ENCODE measurements at regions of chr11 and their contacts with region 1.

Region 1: GRCh38 chr11:100776212-100776896 is 89.3 kb downstream of the ARHGAP42 start:
- DNase-seq: peak; percentile 40 to 100
- H3K4me3 ChIP-seq: peak overlapping the region; percentile 0; the same call in 1 of the 2 replicates
- H3K27ac ChIP-seq: peak overlapping the region; percentile 98
- H3K4me1 ChIP-seq: peaks cover 44% of the 10 kb centered on the region
- H3K27me3 ChIP-seq: no peaks in the 10 kb centered on the region
- CTCF ChIP-seq: no peak

Region 2: DNA sequence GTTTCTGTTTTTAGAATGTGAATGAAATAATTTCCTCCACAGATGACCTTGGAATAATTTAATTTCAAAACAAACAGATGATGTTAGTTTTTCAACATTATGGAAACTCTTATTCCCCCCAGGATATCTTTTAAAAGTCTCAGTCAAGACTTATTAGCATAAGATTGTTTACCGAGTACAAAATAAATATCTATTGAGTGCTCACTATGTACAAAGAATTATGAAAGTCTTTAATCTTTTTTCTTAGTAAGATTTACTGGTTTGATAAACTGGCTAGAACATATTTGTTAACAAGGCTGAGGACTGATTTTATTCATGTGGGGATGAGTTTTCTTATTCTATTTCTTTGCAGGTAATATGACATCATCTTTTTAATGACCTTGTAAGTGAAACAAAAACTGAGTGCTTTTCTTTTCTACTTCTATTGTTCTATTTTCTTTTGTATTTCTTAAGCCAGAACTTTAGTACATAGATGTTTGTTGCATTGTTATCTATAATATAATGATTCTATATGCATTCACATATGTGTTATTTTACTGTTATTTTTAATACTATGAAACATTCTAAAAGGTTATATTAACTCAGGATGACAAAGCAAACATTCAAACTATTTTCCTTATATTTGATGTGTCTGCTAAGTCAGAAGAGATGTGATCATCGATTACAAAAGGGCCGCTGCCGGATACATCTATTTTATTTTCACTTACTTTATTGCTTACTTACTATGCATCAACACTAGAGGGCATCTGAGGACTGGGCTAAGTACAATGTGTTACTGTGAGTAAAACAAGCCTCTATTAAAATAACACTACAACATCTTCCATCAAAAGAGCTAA is 200.3 kb before region 1 on chr11:
- CTCF ChIA-PET with region 1: interaction called, 5 read pairs
- POLR2A ChIA-PET with region 1: interaction called, 22 read pairs
- intact Hi-C with region 1: loop called (anchors 1 kb)
- DNase-seq: peak; percentile 6 to 67
- H3K4me3 ChIP-seq: no peak overlapping the region
- H3K27ac ChIP-seq: no peak overlapping the region
- H3K4me1 ChIP-seq: peaks cover 6% of the 10 kb centered on the region
- H3K27me3 ChIP-seq: no peaks in the 10 kb centered on the region
- CTCF ChIP-seq: peak; percentile 97

Region 3: GRCh38 chr11:100706179-100706578 is 70.2 kb before region 1 on chr11:
- CTCF ChIA-PET with region 1: no interaction called
- POLR2A ChIA-PET with region 1: interaction called, 10 read pairs
- intact Hi-C with region 1: no loop called
- DNase-seq: no peak
- H3K4me3 ChIP-seq: no peak overlapping the region
- H3K27ac ChIP-seq: no peak overlapping the region
- H3K4me1 ChIP-seq: peaks cover 14% of the 10 kb centered on the region
- H3K27me3 ChIP-seq: no peaks in the 10 kb centered on the region
- CTCF ChIP-seq: no peak

Region 4: GRCh38 chr11:100739666-100740065 is 36.7 kb before region 1 on chr11:
- CTCF ChIA-PET with region 1: no interaction called
- POLR2A ChIA-PET with region 1: interaction called, 20 read pairs
- intact Hi-C with region 1: loop called (anchors 1 kb)
- DNase-seq: peak; percentile 74 to 91
- H3K4me3 ChIP-seq: no peak overlapping the region
- H3K27ac ChIP-seq: peak overlapping the region; percentile 63
- H3K4me1 ChIP-seq: peaks cover 40% of the 10 kb centered on the region
- H3K27me3 ChIP-seq: no peaks in the 10 kb centered on the region
- CTCF ChIP-seq: no peak

Region 5: DNA sequence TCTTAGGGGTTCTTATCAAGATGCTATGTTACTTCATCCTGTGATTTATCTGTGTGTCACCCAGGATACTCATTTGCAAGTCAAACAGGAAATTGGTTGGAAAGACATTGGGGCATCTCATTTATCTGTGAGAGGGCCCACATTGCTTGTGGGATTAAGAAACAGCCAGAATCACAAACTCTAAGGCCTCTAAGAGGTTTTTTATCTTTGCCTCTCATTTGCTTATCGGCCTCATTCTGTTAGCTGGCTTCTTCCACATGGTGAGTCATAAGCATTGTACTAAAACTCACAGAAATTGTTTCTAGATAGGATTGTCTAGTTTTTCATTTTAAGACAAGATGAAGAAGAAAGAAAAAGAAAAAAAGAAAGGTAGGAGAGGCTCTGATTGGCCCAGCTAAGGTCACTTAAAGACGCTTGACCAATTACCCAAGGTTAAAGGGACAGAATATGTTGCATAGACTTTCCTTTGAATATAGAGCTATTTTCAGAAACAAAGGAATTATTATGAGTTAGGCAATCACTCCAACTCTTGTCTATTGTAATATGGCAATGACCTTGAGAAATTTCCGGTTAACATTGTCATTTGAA is 32.6 kb after region 1 on chr11:
- CTCF ChIA-PET with region 1: no interaction called
- POLR2A ChIA-PET with region 1: interaction called, 10 read pairs
- intact Hi-C with region 1: no loop called
- DNase-seq: no peak
- H3K4me3 ChIP-seq: no peak overlapping the region
- H3K27ac ChIP-seq: no peak overlapping the region
- H3K4me1 ChIP-seq: peaks cover 5% of the 10 kb centered on the region
- H3K27me3 ChIP-seq: no peaks in the 10 kb centered on the region
- CTCF ChIP-seq: no peak

Region 6: GRCh38 chr11:100855466-100856067 is 79.2 kb after region 1 on chr11:
- CTCF ChIA-PET with region 1: interaction called, 5 read pairs
- POLR2A ChIA-PET with region 1: no interaction called
- intact Hi-C with region 1: loop called (anchors 1 kb)
- DNase-seq: peak in 1 of 2 experiments; percentile 59
- H3K4me3 ChIP-seq: no peak overlapping the region
- H3K27ac ChIP-seq: no peak overlapping the region
- H3K4me1 ChIP-seq: peaks cover 3% of the 10 kb centered on the region
- H3K27me3 ChIP-seq: no peaks in the 10 kb centered on the region
- CTCF ChIP-seq: peak; percentile 89

Region 7: DNA sequence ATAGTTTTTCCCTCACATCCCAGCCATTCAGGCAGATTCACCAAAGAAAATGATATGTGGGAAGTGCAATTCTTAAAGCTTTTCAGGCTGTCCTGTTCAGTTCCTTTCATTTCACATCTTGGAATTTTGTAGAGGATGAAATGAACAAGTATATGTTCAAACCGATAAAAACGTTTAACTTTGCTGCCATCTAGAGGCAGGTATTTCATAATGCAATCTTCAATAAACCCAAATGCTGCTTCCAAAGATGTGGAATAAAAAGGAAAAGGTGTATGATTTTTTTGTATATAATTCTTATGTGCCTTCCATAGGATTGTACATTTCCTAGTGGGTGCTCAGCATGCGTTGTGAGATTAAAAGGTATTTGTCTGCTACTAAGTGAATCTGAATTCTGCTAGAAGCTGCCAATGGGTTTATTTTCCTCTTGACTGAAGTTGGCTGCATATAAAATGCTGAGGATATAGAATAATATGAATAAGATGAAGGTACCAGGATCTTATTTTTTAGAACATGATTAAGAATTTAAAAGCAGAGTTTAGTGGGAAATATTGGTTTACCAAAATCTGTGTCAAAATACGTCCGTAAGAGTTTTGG is 153.9 kb after region 1 on chr11:
- CTCF ChIA-PET with region 1: no interaction called
- POLR2A ChIA-PET with region 1: interaction called, 3 read pairs
- intact Hi-C with region 1: loop called (anchors 1 kb)
- DNase-seq: peak in 1 of 2 experiments; percentile 71
- H3K4me3 ChIP-seq: no peak overlapping the region
- H3K27ac ChIP-seq: no peak overlapping the region
- H3K4me1 ChIP-seq: peaks cover 35% of the 10 kb centered on the region
- H3K27me3 ChIP-seq: no peaks in the 10 kb centered on the region
- CTCF ChIP-seq: peak; percentile 90

Measured in PC-9 (cell line).